PC-3 (cell line): ENCODE measurements at regions of chr14 and their contacts with region 1.

Region 1: DNA sequence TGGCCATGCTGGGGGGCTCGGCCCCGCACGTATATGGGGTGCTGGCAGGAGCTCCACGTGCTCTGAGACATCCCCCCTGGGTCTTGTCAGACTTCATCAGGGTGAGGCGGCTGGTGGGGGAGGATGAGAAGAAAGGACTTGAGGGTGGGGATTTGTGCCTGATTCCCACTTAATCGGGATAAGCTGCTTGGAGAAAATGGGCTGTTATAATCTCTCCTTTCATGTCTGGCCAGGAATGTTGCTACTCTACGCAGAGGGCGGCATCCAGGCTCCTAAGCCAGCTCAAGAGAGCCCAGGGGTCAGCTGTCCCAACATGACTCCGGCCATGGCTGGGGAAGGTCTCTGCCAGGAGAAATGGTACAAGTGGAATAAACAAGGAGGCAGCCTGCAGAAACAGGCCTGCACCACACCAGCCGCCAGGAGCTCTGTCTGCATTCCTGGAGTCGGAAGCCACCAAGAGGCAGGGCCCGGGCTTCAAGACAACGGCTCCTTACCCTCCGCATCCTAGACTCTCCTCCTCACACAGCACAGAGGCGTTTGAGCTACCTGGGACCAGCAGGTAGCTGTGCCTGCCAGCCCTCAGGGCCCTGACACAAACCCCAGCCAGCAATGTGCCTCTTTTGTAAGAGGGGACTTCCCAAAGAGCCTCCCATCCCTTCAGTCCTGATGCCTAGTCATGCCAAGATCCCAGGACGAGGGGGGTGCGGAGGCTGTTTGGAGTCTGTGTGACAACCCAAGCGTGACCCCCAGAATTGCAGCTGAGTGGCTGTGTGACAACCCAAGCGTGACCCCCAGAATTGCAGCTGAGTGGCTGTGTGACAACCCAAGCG is 195.8 kb upstream of the DIO3 start:
- DNase-seq: no peak
- ATAC-seq: no peak
- H3K4me3 ChIP-seq: no peak overlapping the region
- H3K27ac ChIP-seq: no peak overlapping the region
- H3K4me1 ChIP-seq: no peaks in the 10 kb centered on the region
- H3K27me3 ChIP-seq: no peaks in the 10 kb centered on the region
- CTCF ChIP-seq: no peak

Region 2: GRCh38 chr14:101282418-101282817 is 83.1 kb before region 1 on chr14:
- CTCF ChIA-PET with region 1: no interaction called
- POLR2A ChIA-PET with region 1: interaction called, 15 read pairs
- intact Hi-C with region 1: no loop called
- DNase-seq: no peak
- ATAC-seq: no peak
- H3K4me3 ChIP-seq: no peak overlapping the region
- H3K27ac ChIP-seq: no peak overlapping the region
- H3K4me1 ChIP-seq: peaks cover 4% of the 10 kb centered on the region
- H3K27me3 ChIP-seq: no peaks in the 10 kb centered on the region
- CTCF ChIP-seq: no peak

Region 3: DNA sequence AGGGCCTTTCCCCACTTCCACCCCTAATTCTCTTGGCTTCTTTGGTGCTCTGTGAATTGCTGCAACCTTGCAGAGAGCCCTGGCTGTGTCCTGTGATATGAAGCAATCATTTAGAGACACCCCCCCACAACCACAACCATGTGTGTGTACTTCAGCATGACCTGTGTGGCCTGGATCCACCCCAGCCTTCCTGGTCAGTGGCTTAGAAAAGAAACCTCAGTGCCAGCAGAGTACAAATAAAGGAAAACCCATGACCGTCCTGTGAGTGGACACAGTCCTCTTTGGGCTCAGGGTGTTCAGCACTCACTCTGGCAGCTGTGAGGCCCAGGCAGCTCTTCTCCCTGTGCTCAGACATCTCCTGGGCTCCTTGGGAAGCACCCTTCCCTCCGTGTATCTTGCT is 10.8 kb before region 1 on chr14:
- CTCF ChIA-PET with region 1: no interaction called
- POLR2A ChIA-PET with region 1: no interaction called
- intact Hi-C with region 1: no loop called
- DNase-seq: no peak
- ATAC-seq: no peak
- H3K4me3 ChIP-seq: no peak overlapping the region
- H3K27ac ChIP-seq: no peak overlapping the region
- H3K4me1 ChIP-seq: no peaks in the 10 kb centered on the region
- H3K27me3 ChIP-seq: no peaks in the 10 kb centered on the region
- CTCF ChIP-seq: no peak

Region 4: GRCh38 chr14:101426466-101426865 is 60.9 kb after region 1 on chr14:
- CTCF ChIA-PET with region 1: no interaction called
- POLR2A ChIA-PET with region 1: no interaction called
- intact Hi-C with region 1: no loop called
- DNase-seq: no peak
- ATAC-seq: no peak
- H3K4me3 ChIP-seq: no peak overlapping the region
- H3K27ac ChIP-seq: no peak overlapping the region
- H3K4me1 ChIP-seq: no peaks in the 10 kb centered on the region
- H3K27me3 ChIP-seq: no peaks in the 10 kb centered on the region
- CTCF ChIP-seq: no peak